HAP-1 (cell line): ENCODE measurements at regions of chr1 and their contacts with region 1.

Region 1: DNA sequence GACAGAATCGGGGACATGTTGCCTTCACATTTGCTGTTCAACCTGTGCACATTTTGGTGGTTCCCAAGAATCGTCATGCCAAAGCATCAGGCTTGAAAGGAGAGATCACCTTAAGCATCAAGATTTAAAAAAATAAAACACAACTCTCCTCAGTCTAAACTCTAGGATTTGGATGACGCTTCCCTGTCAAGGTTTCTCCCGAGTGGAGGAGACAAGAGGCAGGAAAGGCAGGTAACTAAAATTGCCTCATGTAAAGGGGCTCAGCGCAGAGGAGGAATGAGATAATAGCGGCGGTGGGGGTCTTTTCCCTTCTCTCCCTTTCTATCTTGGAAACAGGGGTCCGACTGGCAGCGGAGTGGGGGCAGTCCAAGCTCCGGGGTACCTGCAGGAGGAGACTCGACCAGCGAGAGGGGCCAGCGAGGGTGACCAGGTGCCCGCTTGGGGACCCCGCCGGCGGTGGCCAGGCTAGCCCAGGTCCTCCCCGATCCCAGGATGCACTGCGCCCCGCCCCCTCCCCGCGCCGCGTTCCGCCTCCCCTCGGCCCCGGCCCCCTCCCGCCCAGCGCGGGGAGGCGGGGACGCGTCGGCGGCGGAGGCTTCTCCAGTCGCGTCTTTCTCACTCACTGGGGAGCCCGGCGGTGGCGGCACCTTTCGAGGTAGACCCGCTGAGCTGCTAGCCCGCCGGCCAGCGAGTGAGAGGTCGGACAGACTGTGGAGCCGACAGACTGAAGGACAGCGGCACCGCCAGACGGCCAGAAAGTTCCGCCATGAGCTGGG is at the start of gene FNBP1L:
- DNase-seq: peak; percentile 77 to 92
- H3K4me3 ChIP-seq: peak within 1 kb of the TSS; percentile 79
- H3K4me1 ChIP-seq: peaks cover 18% of the 10 kb centered on the region
- H3K27me3 ChIP-seq: no peaks in the 10 kb centered on the region

Region 2: DNA sequence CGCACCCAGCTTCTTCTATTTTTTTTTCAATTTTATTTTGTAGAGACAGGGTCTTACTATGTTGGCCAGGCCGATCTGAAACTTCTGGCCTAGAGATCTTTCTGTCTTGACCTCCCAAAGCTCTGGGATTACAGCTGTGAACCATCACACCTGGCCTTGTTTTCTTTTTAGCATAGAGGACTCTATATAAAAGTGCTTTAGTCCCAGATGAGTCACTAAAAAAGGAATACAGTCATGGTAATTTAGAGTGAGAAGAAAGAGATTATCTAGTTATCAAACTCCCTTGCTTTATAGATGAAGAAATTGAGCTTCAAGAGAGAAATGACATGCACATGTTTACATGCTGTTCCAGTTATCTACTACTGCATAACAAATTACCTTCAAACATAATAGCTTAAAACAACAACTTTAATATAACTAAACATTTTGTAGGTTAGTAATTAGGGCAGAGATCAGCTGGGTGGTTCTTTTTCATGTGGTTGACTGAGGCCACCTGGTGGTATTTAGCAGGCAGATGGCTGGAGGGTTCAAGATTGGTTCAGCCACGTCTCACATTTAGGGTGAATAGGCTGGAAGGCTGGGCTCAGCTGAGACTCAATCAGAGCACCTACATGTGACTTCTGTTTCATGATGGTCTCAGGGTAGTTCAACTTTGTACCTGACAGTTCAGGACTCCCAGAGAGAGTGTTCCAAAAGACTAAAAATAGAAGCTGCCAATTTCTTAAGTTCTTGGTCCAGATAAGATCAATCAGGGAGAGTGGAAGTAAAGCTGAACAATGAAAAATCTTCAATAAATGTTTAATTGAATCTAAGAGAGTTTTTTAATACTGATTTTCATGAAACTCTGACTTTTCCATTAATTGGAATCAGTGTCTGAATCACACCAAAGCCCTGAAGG is 385.6 kb before region 1 on chr1:
- in situ Hi-C with region 1: no loop called
- DNase-seq: peak in 1 of 2 experiments; percentile 27
- H3K4me3 ChIP-seq: no peak overlapping the region
- H3K4me1 ChIP-seq: no peaks in the 10 kb centered on the region; the same call in 1 of the 2 replicates
- H3K27me3 ChIP-seq: peaks cover 8% of the 10 kb centered on the region; the same call in 1 of the 2 replicates

Region 3: GRCh38 chr1:93615582-93616150 is 168.0 kb after region 1 on chr1:
- in situ Hi-C with region 1: loop called (anchors 25 kb)
- DNase-seq: peak; percentile 13 to 50
- H3K4me3 ChIP-seq: no peak overlapping the region
- H3K4me1 ChIP-seq: peaks cover 21% of the 10 kb centered on the region
- H3K27me3 ChIP-seq: no peaks in the 10 kb centered on the region

Region 4: DNA sequence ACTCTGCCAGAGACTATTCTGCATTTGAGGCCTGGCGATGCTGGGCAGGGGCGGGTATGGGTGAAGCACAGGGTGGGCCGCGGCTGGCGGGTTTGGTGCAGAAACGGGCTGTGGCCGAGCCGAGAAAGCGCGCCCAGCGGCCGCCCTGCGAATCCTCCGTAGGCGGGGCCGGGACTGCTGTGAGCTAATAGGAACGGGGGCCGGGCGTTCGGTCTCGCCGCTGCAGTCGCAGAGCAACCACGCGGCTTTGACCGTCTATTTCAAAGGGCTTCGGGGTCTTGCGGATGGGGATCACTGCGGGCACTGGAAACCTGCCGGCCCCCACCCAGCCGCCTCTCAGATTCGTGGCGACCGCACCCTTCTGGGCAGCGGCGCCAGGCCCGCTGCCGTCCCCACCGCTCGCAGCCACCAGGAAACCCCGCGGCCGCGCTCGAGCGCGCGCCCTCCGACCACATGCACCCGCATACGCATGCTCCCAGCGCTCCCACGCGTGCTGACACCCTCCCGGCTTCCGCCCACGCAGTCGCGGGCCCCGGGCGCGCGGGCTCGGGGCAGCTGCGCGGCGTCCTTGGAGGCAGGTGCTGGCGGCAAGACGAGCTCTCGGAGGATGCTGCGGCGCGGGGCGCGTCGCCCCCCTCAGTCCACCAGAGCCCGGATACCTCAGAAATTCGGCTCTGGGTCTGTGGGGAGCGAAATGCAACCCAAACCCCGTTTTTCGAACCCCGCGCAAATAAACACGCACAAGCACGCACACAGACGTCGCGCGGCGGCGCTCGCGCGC is 398.7 kb after region 1 on chr1:
- in situ Hi-C with region 1: loop called (anchors 25 kb)
- DNase-seq: peak; percentile 82 to 93
- H3K4me3 ChIP-seq: peak overlapping the region; percentile 83
- H3K4me1 ChIP-seq: peaks cover 5% of the 10 kb centered on the region
- H3K27me3 ChIP-seq: no peaks in the 10 kb centered on the region